Activated T-helper 1 cell treated with anti-CD3 and anti-CD28 coated beads, Interleukin-12 subunit alpha, Interleukin-12 subunit beta, Interleukin-2, Interleukin-4 antibody, amounts not matched to agents 30 ng/mL and 10 ng/mL and 1 ng/mL, durations not matched to agents 14 hours and 24 hours and 36 hours (primary cell): ENCODE measurements at regions of chr4 and their contacts with region 1.

Region 1: GRCh38 chr4:143513306-143514168 is at the start of gene SMARCA5:
- DNase-seq: peak; percentile 95
- H3K4me3 Mint-ChIP-seq: peak within 1 kb of the TSS; percentile 94
- H3K27ac Mint-ChIP-seq: peak within 1 kb of the TSS; percentile 93
- H3K4me1 Mint-ChIP-seq: peaks cover 29% of the 10 kb centered on the region
- H3K27me3 Mint-ChIP-seq: peaks cover 10% of the 10 kb centered on the region
- total RNA-seq, gene SMARCA5: 59.9 and 60.7 TPM in 2 replicates

Region 2: GRCh38 chr4:142452161-142452855 is 1061.2 kb before region 1 on chr4:
- intact Hi-C with region 1: no loop called
- DNase-seq: no peak
- H3K4me3 Mint-ChIP-seq: no peak overlapping the region
- H3K27ac Mint-ChIP-seq: no peak overlapping the region
- H3K4me1 Mint-ChIP-seq: peaks cover 8% of the 10 kb centered on the region
- H3K27me3 Mint-ChIP-seq: no peaks in the 10 kb centered on the region

Region 3: DNA sequence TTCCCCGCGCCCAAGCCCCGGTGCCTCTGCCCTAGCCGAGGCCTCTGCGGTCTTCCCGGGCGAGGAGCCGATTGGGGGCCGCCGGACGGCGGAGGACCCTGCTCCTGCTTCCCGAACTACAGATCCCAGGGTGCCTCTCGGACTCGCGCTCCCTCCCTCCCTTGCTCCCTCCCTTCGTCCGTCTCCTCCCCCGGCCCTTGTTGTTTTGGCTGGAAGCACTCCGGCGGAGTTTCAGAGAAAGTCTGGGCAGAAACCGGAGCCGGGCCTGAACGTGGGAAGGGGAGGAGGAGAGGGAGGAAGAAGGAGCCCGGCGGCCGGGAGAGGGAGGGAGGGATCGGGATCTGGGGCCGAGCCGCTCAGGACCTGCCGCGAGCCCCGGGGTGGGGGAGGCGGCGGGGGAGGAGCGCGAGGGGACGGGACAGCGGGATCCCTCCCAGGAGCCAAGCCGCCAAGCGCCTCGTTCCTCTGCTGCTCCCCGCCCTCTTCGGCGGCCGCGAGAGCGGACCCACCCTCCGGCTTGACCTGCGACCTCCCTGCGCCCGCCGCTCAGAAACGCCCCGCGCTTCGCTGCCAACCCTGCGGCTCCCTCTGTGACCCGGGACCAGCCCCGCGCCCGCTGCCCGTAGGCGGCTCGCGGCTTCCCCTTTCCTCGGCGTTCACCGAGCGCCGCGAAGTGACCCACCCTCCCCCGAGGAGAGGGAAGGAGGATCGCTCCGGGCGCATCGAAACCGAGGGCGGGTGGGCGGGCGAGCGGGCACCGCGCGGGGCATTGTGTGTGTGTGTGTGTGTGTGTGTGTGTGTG is 177.4 kb before region 1 on chr4:
- intact Hi-C with region 1: loop called (anchors 1 kb)
- DNase-seq: peak; percentile 4
- H3K4me3 Mint-ChIP-seq: peak overlapping the region; percentile 89
- H3K27ac Mint-ChIP-seq: no peak overlapping the region
- H3K4me1 Mint-ChIP-seq: peaks cover 6% of the 10 kb centered on the region
- H3K27me3 Mint-ChIP-seq: peaks cover 56% of the 10 kb centered on the region

Region 4: DNA sequence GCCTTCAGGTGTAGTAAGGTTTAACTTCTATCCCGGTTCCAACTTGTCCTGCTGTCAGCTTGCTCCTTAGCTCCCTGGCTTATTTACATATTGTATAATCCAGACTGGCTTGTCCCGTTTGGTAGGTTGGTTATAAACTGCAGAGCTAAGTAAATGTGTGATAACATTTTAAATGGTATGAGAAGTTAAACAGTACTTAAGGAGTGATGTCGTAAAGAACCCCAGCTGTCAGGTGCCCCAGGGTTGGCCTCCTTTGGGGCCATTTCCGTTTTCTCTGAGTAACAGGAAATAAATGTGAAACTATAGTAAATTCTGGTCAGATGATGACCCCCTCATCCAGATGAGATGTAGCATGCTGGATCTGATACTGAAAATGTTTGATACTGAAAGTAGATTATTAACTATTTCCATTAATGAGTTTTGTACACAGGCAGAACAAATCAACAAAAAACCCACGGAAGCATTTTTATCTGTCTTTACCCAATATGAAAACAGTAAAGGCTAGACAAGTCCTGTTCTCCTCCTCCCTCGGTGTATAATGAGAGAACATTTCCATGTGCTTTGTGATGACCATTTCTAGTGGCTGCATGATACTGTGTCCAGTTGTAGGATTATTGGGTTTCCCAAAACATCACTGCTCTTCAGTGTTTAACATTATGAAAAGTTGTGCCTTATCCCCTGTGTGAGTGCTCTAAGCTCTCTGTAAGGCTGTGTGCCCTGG is 154.5 kb before region 1 on chr4:
- intact Hi-C with region 1: loop called (anchors 1 kb)
- DNase-seq: no peak
- H3K4me3 Mint-ChIP-seq: peak overlapping the region; percentile 62
- H3K27ac Mint-ChIP-seq: peak overlapping the region; percentile 84
- H3K4me1 Mint-ChIP-seq: peaks cover 18% of the 10 kb centered on the region
- H3K27me3 Mint-ChIP-seq: peaks cover 5% of the 10 kb centered on the region

Region 5: GRCh38 chr4:143399113-143399949 is 114.2 kb before region 1 on chr4:
- intact Hi-C with region 1: loop called (anchors 2 kb)
- DNase-seq: no peak
- H3K4me3 Mint-ChIP-seq: no peak overlapping the region
- H3K27ac Mint-ChIP-seq: no peak overlapping the region
- H3K4me1 Mint-ChIP-seq: peaks cover 11% of the 10 kb centered on the region
- H3K27me3 Mint-ChIP-seq: peaks cover 17% of the 10 kb centered on the region

Region 6: DNA sequence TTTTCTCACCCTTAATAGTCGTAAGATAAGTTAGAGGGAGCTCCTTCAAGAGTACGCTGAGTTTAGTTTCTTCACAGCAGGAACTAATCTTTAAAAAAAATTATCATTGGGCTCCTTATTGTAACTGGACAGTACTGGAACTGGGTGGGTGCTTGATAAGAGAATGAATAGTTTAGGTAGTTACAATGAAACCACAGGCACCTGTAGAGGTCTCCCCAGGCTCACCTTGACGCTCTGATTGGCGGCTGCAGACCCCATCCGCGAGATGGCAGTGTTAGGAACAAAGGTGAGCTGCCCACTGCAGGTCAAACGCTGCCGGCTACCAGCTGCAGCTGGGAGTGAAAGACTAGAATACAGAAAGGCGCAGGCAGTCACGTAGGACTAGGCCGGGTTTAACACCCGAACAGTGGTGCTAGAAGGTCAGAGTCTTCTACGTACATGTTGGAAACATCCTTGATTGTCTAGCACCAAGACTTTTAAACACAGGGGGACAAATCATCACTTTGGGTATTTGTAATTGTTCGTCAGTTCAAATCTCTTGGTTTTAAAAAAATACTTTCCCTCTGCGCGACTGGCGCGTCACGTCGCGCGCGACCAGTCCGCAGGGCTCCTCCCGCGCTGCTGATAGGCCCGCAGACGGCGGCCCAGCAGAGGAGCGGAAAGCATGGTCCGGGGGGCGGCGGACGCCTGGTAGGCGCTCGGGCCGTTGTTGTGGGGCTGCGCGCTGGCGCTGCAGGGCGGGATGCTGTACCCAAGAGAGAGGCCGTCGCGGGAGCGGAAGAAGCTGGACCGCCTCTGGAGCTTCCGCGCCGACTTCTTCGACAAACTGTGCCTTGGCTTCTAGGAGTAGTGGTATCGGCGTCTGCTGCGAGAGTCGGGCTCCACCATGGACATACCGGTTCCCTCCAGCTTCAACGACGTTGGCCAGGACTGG is 45.6 kb after region 1 on chr4:
- intact Hi-C with region 1: loop called (anchors 1 kb)
- DNase-seq: peak; percentile 62
- H3K4me3 Mint-ChIP-seq: peak overlapping the region; percentile 87
- H3K27ac Mint-ChIP-seq: peak overlapping the region; percentile 87
- H3K4me1 Mint-ChIP-seq: peaks cover 42% of the 10 kb centered on the region
- H3K27me3 Mint-ChIP-seq: no peaks in the 10 kb centered on the region

Region 7: GRCh38 chr4:145097821-145098674 is 1584.5 kb after region 1 on chr4 and contains the starts of genes ABCE1 and ANAPC10:
- intact Hi-C with region 1: loop called (anchors 1 kb)
- DNase-seq: peak; percentile 94
- H3K4me3 Mint-ChIP-seq: peak within 1 kb of the TSS; percentile 92
- H3K27ac Mint-ChIP-seq: peak within 1 kb of the TSS; percentile 100
- H3K4me1 Mint-ChIP-seq: peaks cover 27% of the 10 kb centered on the region
- H3K27me3 Mint-ChIP-seq: no peaks in the 10 kb centered on the region
- total RNA-seq, gene ABCE1: 155 and 176 TPM in 2 replicates
- total RNA-seq, gene ANAPC10: 25.4 and 32.1 TPM in 2 replicates